Activated CD8-positive, alpha-beta T cell treated with anti-CD3 and anti-CD28 coated beads for 36 hours (primary cell): ENCODE measurements at regions of chr7 and their contacts with region 1.

Region 1: GRCh38 chr7:95916573-95917297 is 144.4 kb downstream of the DYNC1I1 start:
- DNase-seq: peak; percentile 86
- ATAC-seq: no peak
- H3K4me3 Mint-ChIP-seq: no peak overlapping the region
- H3K27ac Mint-ChIP-seq: no peak overlapping the region
- H3K4me1 Mint-ChIP-seq: peaks cover 2% of the 10 kb centered on the region
- H3K27me3 Mint-ChIP-seq: peaks cover 19% of the 10 kb centered on the region
- CTCF ChIP-seq: peak; percentile 78

Region 2: DNA sequence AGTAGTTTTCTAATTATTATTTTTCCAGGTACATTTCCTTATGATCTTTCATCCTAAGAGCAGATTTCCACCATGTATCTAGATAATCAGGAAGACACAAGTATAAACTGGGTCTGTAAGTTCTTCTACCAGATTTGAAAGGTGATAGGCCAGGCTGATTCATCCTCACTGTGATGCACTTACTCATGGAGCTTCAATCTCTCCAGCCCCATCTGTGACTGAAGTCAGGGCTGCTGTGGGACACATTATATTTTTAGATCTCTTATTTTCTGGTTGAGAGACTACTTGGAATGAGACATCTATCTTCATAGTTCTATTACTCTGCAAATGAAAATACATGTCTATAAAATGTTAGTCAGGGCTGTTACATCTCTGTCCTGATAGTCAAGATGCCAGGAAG is 490.7 kb after region 1 on chr7:
- CTCF ChIA-PET with region 1: no interaction called
- POLR2A ChIA-PET with region 1: no interaction called
- intact Hi-C with region 1: loop called (anchors 10 kb)
- DNase-seq: no peak
- ATAC-seq: no peak
- H3K4me3 Mint-ChIP-seq: no peak overlapping the region
- H3K27ac Mint-ChIP-seq: no peak overlapping the region
- H3K4me1 Mint-ChIP-seq: no peaks in the 10 kb centered on the region
- H3K27me3 Mint-ChIP-seq: peaks cover 15% of the 10 kb centered on the region
- CTCF ChIP-seq: no peak

Region 3: GRCh38 chr7:97064967-97065587 is 1148.3 kb after region 1 on chr7:
- CTCF ChIA-PET with region 1: interaction called, 23 read pairs
- POLR2A ChIA-PET with region 1: no interaction called
- intact Hi-C with region 1: no loop called
- DNase-seq: peak; percentile 21
- ATAC-seq: no peak
- H3K4me3 Mint-ChIP-seq: no peak overlapping the region
- H3K27ac Mint-ChIP-seq: no peak overlapping the region
- H3K4me1 Mint-ChIP-seq: no peaks in the 10 kb centered on the region
- H3K27me3 Mint-ChIP-seq: peaks cover 8% of the 10 kb centered on the region
- CTCF ChIP-seq: peak; percentile 57